CD4-positive, alpha-beta T cell (primary cell): ENCODE measurements at regions of chr4 and their contacts with region 1.

Region 1: DNA sequence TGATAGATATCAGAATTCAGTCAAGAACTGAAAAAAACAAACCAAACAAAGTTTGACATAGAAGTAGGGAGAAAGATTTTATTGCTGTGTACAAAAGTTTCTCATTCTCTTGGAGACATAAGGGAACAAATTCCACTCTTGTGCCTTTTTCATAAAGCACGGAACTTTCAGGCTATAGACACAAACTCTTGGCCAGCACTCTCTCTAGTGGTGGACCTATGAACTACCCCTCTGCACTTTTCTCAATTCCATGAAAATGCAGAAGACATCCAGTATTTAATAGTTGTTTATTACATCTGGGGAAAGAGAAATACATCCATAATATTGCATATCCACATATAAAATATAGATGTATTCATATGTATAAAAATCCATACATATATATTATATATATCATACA is 291.6 kb upstream of the HS3ST1 start:
- DNase-seq: peak in 3 of 14 experiments; percentile 1 to 11 (median 9)
- ATAC-seq: no peak
- H3K4me3 ChIP-seq: no peak overlapping the region
- H3K4me3 Mint-ChIP-seq: no peak overlapping the region
- H3K27ac ChIP-seq: no peak overlapping the region
- H3K27ac Mint-ChIP-seq: no peak overlapping the region
- H3K4me1 ChIP-seq: no peaks in the 10 kb centered on the region
- H3K4me1 Mint-ChIP-seq: no peaks in the 10 kb centered on the region
- H3K27me3 ChIP-seq: no peaks in the 10 kb centered on the region
- H3K27me3 Mint-ChIP-seq: peaks cover 27% of the 10 kb centered on the region
- CTCF ChIP-seq: peak; percentile 40

Region 2: DNA sequence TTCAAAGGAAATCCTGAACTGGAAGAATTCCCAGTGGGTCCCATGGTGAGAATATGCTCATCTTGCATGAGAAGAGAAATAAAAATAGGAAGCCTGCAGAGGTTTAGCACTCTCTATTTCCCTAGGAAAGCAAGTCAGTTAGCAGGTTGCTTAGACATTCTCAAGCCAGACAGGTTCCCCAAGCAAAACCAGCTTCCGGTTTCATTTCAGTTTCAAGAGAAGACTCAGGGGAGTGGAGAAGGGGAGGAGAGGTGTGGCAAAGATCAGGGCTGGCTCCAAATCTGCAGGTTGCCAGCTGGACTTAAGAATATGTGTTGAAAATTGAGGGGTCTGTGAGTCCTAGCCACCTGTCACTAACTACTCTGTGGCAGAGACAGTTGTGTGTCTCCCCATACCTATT is 1143.3 kb before region 1 on chr4:
- CTCF ChIA-PET with region 1: no interaction called
- POLR2A ChIA-PET with region 1: no interaction called
- intact Hi-C with region 1: loop called (anchors 5 to 10 kb)
- DNase-seq: peak in 1 of 14 experiments; percentile 21
- ATAC-seq: peak; percentile 52
- H3K4me3 ChIP-seq: no peak overlapping the region
- H3K4me3 Mint-ChIP-seq: peak overlapping the region; percentile 18
- H3K27ac ChIP-seq: no peak overlapping the region
- H3K27ac Mint-ChIP-seq: peak overlapping the region; percentile 32
- H3K4me1 ChIP-seq: peaks cover 13% of the 10 kb centered on the region
- H3K4me1 Mint-ChIP-seq: peaks cover 6% of the 10 kb centered on the region
- H3K27me3 ChIP-seq: no peaks in the 10 kb centered on the region
- H3K27me3 Mint-ChIP-seq: no peaks in the 10 kb centered on the region
- CTCF ChIP-seq: no peak

Region 3: GRCh38 chr4:10582059-10582686 is 1138.1 kb before region 1 on chr4:
- CTCF ChIA-PET with region 1: no interaction called
- POLR2A ChIA-PET with region 1: no interaction called
- intact Hi-C with region 1: loop called (anchors 5 to 10 kb)
- DNase-seq: peak in 4 of 14 experiments; percentile 25 to 52 (median 38)
- ATAC-seq: no peak
- H3K4me3 ChIP-seq: no peak overlapping the region
- H3K4me3 Mint-ChIP-seq: no peak overlapping the region
- H3K27ac ChIP-seq: no peak overlapping the region
- H3K27ac Mint-ChIP-seq: no peak overlapping the region
- H3K4me1 ChIP-seq: peaks cover 16% of the 10 kb centered on the region
- H3K4me1 Mint-ChIP-seq: peaks cover 17% of the 10 kb centered on the region
- H3K27me3 ChIP-seq: no peaks in the 10 kb centered on the region
- H3K27me3 Mint-ChIP-seq: no peaks in the 10 kb centered on the region
- CTCF ChIP-seq: peak; percentile 75